ENCODE measurements at regions of chr22 and their contacts with region 1.

Region 1: GRCh38 chr22:38872172-38872830 is at the start of gene CBX6:
- DNase-seq: peak; percentile 98
- ATAC-seq: peak; percentile 91
- total RNA-seq, gene CBX6: 36.1 TPM

Region 2: GRCh38 chr22:38681784-38682335 is 190.4 kb before region 1 on chr22 and contains the start of gene TOMM22:
- intact Hi-C with region 1: no loop called
- DNase-seq: peak; percentile 94
- ATAC-seq: peak; percentile 100
- total RNA-seq, gene TOMM22: 60.9 TPM

Region 3: DNA sequence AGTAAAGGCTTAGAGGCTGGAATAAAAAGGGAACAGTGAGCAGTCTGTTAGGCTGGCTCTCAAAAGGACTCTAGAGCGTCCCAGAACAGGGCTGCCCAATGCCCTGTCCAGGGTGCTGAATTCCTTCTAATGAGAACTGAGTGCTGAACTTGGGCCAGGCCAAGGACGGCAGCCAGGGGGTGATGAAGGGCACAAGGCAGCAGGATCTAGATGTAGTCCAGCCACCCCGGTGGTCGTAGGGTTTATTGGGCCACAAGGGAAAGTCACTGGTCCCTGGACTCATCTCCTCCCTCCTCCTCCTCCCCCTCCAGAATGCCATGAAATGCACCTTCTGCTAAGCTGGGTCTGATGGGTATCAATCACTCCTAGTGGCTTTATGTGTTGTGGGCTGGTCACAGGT is 47.7 kb before region 1 on chr22:
- intact Hi-C with region 1: no loop called
- DNase-seq: peak; percentile 64
- ATAC-seq: peak; percentile 86

Region 4: GRCh38 chr22:38927033-38927781 is 54.9 kb after region 1 on chr22:
- intact Hi-C with region 1: loop called (anchors 5 kb)
- DNase-seq: peak; percentile 85
- ATAC-seq: peak; percentile 86